ENCODE measurements at regions of chr10 and their contacts with region 1.

Region 1: GRCh38 chr10:43221419-43222209 is 45.3 kb downstream of the RASGEF1A start:
- DNase-seq: peak; percentile 75
- ATAC-seq: peak; percentile 97
- H3K4me3 Mint-ChIP-seq: no peak overlapping the region
- H3K27ac Mint-ChIP-seq: no peak overlapping the region
- H3K4me1 Mint-ChIP-seq: peaks cover 8% of the 10 kb centered on the region
- H3K27me3 Mint-ChIP-seq: no peaks in the 10 kb centered on the region
- CTCF ChIP-seq: no peak

Region 2: DNA sequence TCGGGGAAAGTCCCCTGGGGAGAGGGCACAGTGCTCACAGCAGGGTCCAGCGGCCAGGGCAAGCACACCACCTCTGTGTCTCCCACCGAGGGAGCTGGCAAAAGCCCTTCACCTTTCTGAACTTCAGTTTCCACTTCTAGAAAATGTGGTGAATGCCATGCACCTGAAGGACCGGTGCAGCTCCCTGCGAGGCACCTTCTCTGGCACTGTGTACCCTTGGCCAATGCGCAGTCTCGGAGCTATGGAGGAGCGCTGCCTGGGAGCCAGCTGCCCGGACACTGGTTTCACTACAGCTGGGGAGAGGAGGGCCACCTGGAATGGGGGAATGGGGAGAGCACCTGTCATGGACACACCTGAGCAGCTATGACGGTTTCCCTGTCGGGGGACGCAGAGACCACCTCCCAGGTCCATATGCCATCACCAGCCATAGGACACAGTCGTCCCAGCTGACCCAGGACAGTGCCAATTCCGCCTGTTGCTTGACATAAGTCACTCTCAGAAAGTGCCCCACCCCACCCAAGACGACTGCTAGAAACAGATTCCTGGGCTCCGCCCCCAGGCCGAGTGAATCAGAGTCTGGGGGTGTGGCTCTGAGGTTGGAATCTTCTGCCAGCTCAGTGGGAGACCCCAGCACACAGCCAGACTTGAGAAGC is 28.5 kb after region 1 on chr10:
- CTCF ChIA-PET with region 1: interaction called, 38 read pairs
- POLR2A ChIA-PET with region 1: no interaction called
- DNase-seq: peak; percentile 55
- ATAC-seq: peak; percentile 67
- H3K4me3 Mint-ChIP-seq: no peak overlapping the region
- H3K27ac Mint-ChIP-seq: no peak overlapping the region
- H3K4me1 Mint-ChIP-seq: peaks cover 19% of the 10 kb centered on the region
- H3K27me3 Mint-ChIP-seq: peaks cover 3% of the 10 kb centered on the region; the same call in 1 of the 2 replicates
- CTCF ChIP-seq: no peak

Region 3: GRCh38 chr10:43255634-43256431 is 34.2 kb after region 1 on chr10:
- CTCF ChIA-PET with region 1: interaction called, 38 read pairs
- POLR2A ChIA-PET with region 1: no interaction called
- DNase-seq: peak; percentile 74
- ATAC-seq: peak; percentile 94
- H3K4me3 Mint-ChIP-seq: no peak overlapping the region
- H3K27ac Mint-ChIP-seq: no peak overlapping the region
- H3K4me1 Mint-ChIP-seq: peaks cover 15% of the 10 kb centered on the region
- H3K27me3 Mint-ChIP-seq: no peaks in the 10 kb centered on the region; the same call in 1 of the 2 replicates
- CTCF ChIP-seq: peak; percentile 63

Region 4: DNA sequence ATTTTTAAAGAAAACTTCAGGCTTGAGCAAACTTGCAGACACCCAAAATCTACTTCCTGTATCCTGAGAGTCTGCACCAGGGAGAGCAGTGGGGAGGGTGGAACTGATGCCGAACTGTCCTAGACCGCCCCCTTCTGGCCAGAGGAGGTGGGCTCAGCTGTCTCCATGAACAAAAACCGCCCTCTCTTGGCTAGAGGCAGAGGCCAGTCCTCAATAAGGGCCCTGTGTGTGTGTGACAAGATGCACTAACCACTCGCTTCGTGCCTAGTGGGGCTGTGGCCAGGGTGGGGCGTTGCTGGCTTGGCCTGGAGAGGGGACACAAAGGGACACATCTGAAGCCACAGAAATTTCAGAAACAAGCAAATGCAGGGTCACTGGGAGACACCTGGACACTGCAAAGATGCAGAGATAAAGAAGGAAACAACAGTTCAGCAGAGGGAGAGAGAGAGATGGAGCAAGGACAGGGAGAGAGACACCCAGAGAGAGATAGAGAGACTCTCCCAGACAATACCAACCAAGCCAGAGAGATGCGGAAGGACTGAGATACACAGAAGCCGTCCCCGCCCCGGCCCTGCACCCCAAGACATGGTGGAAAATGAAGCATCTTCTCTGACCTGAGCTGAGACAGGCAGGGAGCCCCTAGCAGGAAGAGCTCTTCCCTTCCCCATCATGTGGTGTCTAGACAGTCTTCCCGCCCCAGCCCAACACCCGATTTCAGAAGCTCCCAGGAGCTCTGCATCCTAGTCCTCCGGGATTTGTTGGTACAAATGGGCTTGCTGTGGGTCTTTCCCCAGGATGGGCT is 127.1 kb after region 1 on chr10:
- CTCF ChIA-PET with region 1: interaction called, 13 read pairs
- POLR2A ChIA-PET with region 1: no interaction called
- DNase-seq: peak; percentile 88
- ATAC-seq: peak; percentile 99
- H3K4me3 Mint-ChIP-seq: no peak overlapping the region
- H3K27ac Mint-ChIP-seq: peak overlapping the region; percentile 81
- H3K4me1 Mint-ChIP-seq: peaks cover 20% of the 10 kb centered on the region
- H3K27me3 Mint-ChIP-seq: no peaks in the 10 kb centered on the region
- CTCF ChIP-seq: peak; percentile 87